Sigmoid colon (tissue), 7 donors: ENCODE measurements at regions of chr6 and their contacts with region 1.

Region 1: GRCh38 chr6:7725849-7726415 is at the start of gene BMP6:
- DNase-seq: peak; percentile 91
- H3K4me3 ChIP-seq: peak within 1 kb of the TSS; percentile 28 to 61 (median 49)
- H3K27ac ChIP-seq: peak within 1 kb of the TSS in 1 of 4 donors; percentile 10
- H3K4me1 ChIP-seq: peaks cover 0 to 38% (median 33%) of the 10 kb centered on the region in 4 donors
- H3K27me3 ChIP-seq: peaks cover 40 to 62% (median 49%) of the 10 kb centered on the region in 3 donors
- CTCF ChIP-seq: no peak
- EP300 ChIP-seq: no peak
- POLR2A ChIP-seq: no peak
- total RNA-seq, gene BMP6: 1.5 to 5.3 (median 2.5) TPM

Region 2: GRCh38 chr6:7910654-7911344 is 184.9 kb after region 1 on chr6 and contains the start of gene TXNDC5:
- intact Hi-C with region 1: loop called (anchors 2 kb)
- DNase-seq: peak; percentile 83
- H3K4me3 ChIP-seq: peak within 1 kb of the TSS; percentile 53 to 98 (median 88)
- H3K27ac ChIP-seq: peak within 1 kb of the TSS; percentile 73 to 85 (median 79)
- H3K4me1 ChIP-seq: peaks cover 0 to 15% (median 15%) of the 10 kb centered on the region in 4 donors
- H3K27me3 ChIP-seq: no peaks in the 10 kb centered on the region
- CTCF ChIP-seq: no peak
- EP300 ChIP-seq: no peak
- POLR2A ChIP-seq: no peak
- total RNA-seq, gene TXNDC5: 48.1 to 64.9 (median 52.9) TPM

Region 3: GRCh38 chr6:7996538-7997111 is 270.7 kb after region 1 on chr6:
- intact Hi-C with region 1: loop called (anchors 5 kb)
- DNase-seq: peak; percentile 73
- H3K4me3 ChIP-seq: no peak overlapping the region
- H3K27ac ChIP-seq: peak overlapping the region in 2 of 4 donors; percentile 66 to 78
- H3K4me1 ChIP-seq: peaks cover 0 to 53% (median 41%) of the 10 kb centered on the region in 4 donors
- H3K27me3 ChIP-seq: peaks cover 0 to 5% (median 0%) of the 10 kb centered on the region in 3 donors
- CTCF ChIP-seq: peak in 1 of 4 experiments; percentile 5
- EP300 ChIP-seq: no peak
- POLR2A ChIP-seq: no peak

Region 4: DNA sequence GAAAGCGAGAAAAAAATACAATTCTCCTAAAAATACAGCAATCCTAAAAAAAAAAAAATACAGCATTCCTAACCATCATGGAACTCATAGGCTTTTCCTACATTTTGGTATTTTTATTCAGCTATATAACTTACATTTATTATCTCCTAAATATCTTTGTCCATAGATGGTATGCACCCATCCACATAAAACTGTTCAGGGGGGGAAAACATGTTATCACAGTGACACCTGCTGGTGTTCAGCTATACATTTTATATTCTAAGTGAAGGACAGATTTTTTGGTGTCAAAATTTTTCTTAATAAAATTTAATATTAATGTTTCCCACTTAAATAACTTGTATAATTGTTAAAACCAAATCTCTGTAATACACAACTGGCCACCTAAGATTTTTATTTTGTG is 280.3 kb after region 1 on chr6:
- intact Hi-C with region 1: loop called (anchors 2 kb)
- DNase-seq: no peak
- H3K4me3 ChIP-seq: no peak overlapping the region
- H3K27ac ChIP-seq: no peak overlapping the region
- H3K4me1 ChIP-seq: no peaks in the 10 kb centered on the region
- H3K27me3 ChIP-seq: no peaks in the 10 kb centered on the region
- CTCF ChIP-seq: peak; percentile 14 to 41 (median 17)
- EP300 ChIP-seq: no peak
- POLR2A ChIP-seq: no peak

Region 5: GRCh38 chr6:8063761-8064637 is 338.1 kb after region 1 on chr6 and contains the start of gene BLOC1S5:
- intact Hi-C with region 1: loop called (anchors 5 kb)
- DNase-seq: peak; percentile 98
- H3K4me3 ChIP-seq: peak within 1 kb of the TSS; percentile 62 to 99 (median 82)
- H3K27ac ChIP-seq: peak within 1 kb of the TSS; percentile 87 to 96 (median 89)
- H3K4me1 ChIP-seq: peaks cover 0 to 16% (median 7%) of the 10 kb centered on the region in 4 donors
- H3K27me3 ChIP-seq: no peaks in the 10 kb centered on the region
- CTCF ChIP-seq: no peak
- EP300 ChIP-seq: no peak
- POLR2A ChIP-seq: peak; percentile 25 to 44
- total RNA-seq, gene BLOC1S5: 10.8 to 16.2 (median 12.8) TPM